Right cardiac atrium (tissue), 5 donors: ENCODE measurements at regions of chr12 and their contacts with region 1.

Region 1: DNA sequence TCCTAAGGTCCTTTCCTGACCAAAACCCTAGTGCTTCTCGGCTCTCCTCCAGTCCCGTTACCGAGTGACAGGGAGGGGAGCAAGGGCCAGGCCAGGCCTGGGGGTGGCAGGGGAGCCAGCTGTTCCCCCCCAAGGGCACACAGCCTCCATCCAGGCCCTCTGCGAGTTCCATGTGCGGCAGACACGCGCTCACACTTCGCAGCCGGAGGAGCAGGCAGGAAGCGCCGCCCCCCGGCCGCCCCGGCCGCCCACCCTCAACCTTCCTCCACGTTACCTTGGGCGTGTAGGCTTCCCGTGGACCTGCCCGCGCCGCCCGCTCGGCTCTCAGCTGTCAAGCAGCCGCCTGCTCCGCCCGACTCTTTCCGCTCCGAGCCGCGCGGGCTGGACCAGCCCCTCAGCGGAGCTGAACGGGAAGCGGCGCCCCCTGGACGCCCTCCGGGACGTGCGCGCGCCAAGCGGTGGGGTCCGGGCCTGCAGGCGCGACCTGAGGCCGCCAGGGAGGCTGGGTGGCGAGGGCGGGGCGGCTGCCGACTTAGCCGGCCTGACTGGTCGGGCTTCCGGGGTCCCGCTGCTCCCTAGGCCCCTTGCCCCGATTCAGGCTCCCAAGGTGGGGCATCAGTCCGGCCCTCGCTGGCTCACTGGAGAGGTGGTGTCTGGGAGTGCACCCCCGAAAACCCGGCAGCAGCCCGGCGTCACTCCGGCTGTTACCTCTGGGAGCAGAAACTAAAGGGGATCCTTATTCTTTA is at the start of gene CRACR2A:
- DNase-seq: peak; percentile 83 to 91 (median 89)
- ATAC-seq: peak; percentile 88 to 90
- H3K4me3 ChIP-seq: peak within 1 kb of the TSS; percentile 33
- H3K27ac ChIP-seq: no peak within 1 kb of the TSS
- H3K4me1 ChIP-seq: peaks cover 1% of the 10 kb centered on the region
- H3K27me3 ChIP-seq: no peaks in the 10 kb centered on the region
- total RNA-seq, gene CRACR2A: 7.5 to 15.5 (median 9.8) TPM

Region 2: DNA sequence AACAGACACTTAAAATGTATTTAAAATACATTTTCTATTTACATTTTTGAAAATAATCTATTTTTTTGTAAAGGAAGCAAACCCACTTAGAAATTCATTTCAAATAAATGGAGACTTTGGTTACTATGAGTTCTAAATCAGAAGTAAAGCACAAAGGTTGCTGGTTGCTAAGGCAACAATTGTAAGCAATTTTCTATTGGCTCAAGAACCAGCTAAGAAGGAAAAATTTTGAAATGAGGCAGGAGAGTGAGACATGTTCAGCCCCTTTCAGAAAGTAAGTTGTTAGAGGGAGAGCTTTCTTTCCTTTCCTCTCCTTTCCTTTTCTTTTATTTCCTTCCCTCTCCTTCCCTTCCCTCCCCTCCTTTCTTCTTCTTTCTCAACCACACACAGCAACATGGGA is 181.2 kb before region 1 on chr12:
- intact Hi-C with region 1: no loop called
- DNase-seq: no peak
- ATAC-seq: no peak
- H3K4me3 ChIP-seq: no peak overlapping the region
- H3K27ac ChIP-seq: no peak overlapping the region
- H3K4me1 ChIP-seq: no peaks in the 10 kb centered on the region
- H3K27me3 ChIP-seq: no peaks in the 10 kb centered on the region

Region 3: DNA sequence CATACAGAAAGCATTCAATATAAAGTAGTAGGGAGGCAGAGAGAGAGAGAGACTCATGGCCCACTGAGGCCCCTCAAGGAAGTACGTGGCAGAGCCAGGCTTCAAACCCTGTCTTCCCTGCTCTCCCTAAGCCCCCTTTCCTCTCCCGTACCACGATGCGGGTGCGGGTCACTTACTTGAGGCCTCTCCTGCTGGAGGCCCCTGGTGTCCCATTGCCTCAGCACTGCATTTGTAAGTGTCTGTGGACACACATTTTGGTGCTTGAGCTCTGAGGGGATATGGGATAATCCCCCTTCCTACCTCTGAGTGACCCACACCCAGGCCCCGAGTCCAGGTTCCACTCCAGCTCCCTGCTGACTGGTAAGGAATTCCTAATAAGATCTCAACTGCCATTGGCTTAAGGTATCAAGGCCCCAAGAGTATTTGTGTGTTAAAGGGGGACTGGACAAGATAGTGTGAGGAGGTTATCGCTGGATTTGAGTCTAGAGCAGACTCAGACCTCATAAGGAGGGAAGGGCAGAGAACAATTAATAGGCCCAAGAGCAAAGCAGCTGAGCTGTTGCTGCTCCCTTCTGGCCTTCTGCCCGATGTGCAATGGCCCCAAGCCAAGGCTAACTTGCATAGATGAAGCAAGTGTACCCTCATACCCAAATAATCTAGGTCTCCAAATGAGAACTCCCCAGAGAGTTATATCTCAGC is 71.9 kb before region 1 on chr12:
- intact Hi-C with region 1: loop called in 1 of 4 experiments (anchors 10 kb)
- DNase-seq: peak; percentile 73 to 91 (median 88)
- ATAC-seq: peak; percentile 50 to 60
- H3K4me3 ChIP-seq: no peak overlapping the region
- H3K27ac ChIP-seq: no peak overlapping the region
- H3K4me1 ChIP-seq: peaks cover 2% of the 10 kb centered on the region
- H3K27me3 ChIP-seq: no peaks in the 10 kb centered on the region

Region 4: GRCh38 chr12:3803865-3804472 is 51.1 kb after region 1 on chr12:
- intact Hi-C with region 1: no loop called
- DNase-seq: peak; percentile 77 to 86 (median 78)
- ATAC-seq: peak; percentile 83 to 85
- H3K4me3 ChIP-seq: no peak overlapping the region
- H3K27ac ChIP-seq: no peak overlapping the region
- H3K4me1 ChIP-seq: no peaks in the 10 kb centered on the region
- H3K27me3 ChIP-seq: no peaks in the 10 kb centered on the region

Region 5: DNA sequence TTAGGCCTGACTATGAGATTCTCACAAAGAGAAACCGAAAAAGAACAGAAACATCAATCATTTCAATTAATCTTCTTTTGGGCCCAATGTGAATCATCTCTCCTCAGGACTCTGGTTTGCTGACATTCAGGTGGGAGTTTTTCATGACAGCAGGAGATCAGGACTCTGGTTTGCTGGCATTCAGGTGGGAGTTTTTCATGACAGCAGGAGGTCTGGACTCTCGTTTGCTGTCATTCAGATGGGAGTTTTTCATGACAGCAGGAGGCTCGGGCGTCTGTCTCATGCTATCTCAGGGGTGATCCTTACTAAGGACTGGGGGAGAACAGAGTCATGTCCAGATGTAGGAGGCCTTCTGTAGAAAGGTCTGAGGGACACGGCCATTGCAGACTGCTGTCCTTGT is 160.4 kb after region 1 on chr12:
- intact Hi-C with region 1: no loop called
- DNase-seq: no peak
- ATAC-seq: no peak
- H3K4me3 ChIP-seq: no peak overlapping the region
- H3K27ac ChIP-seq: no peak overlapping the region
- H3K4me1 ChIP-seq: no peaks in the 10 kb centered on the region
- H3K27me3 ChIP-seq: no peaks in the 10 kb centered on the region